ENCODE measurements at regions of chr7 and their contacts with region 1.

Region 1: GRCh38 chr7:954330-955238 is at the start of gene ADAP1:
- DNase-seq: peak; percentile 52
- H3K4me3 ChIP-seq: no peak within 1 kb of the TSS
- H3K27ac ChIP-seq: no peak within 1 kb of the TSS
- H3K4me1 ChIP-seq: peaks cover 22% of the 10 kb centered on the region
- CTCF ChIP-seq: no peak
- total RNA-seq, gene ADAP1: 0.41 and 2.4 TPM in 2 replicates

Region 2: GRCh38 chr7:974820-975681 is 20.5 kb after region 1 on chr7 and contains the start of gene COX19:
- CTCF ChIA-PET with region 1: interaction called, 4 read pairs
- POLR2A ChIA-PET with region 1: interaction called, 11 read pairs
- intact Hi-C with region 1: no loop called
- DNase-seq: peak; percentile 94
- H3K4me3 ChIP-seq: peak within 1 kb of the TSS; percentile 100
- H3K27ac ChIP-seq: peak within 1 kb of the TSS; percentile 73
- H3K4me1 ChIP-seq: peaks cover 74% of the 10 kb centered on the region
- CTCF ChIP-seq: no peak
- total RNA-seq, gene COX19: 20.3 and 23.2 TPM in 2 replicates

Measured in OCI-LY7 (cell line).